B cell (primary cell): ENCODE measurements at regions of chr4 and their contacts with region 1.

Region 1: DNA sequence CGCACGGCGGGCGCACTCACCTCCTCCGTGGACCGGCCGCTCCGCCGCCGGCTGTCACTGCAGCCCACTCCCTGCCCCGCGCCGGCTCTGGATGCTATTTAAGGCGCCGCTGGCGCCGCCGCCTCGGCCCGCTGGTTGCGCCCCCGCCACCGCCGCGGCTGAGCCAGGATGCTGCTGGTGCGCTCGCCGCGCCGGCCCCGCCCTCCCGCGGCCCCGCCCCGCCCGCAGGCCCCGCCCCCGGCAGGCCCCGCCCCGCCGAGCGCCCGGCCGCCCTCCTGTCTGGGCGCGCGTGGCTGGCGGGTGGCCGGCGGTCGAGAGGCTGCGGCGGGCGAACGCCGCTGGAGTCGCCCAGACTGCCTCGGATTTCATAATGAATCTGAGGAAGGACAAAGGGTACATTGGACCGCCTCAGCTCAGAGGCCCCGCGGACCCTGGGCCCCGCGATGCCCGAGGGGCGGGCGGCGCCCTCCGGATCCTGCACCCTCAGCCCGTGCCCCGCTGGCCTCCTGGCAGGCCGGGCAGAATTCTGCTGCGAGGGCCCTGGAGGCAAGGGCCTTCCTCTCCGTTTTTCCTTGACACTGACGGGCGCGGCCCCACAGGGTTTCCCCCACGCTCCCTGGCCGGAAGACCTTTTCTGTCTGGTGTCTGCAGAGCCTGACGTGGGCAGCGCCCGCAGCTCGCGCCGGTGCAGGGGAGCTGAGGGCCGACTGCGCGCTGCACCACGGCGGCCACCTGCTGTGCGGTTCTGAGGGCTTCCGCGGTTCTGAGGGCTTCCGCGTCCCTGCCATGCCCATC is at the start of gene ACSL1:
- DNase-seq: peak; percentile 89
- ATAC-seq: peak; percentile 80
- H3K4me3 ChIP-seq: peak within 1 kb of the TSS; percentile 58 to 94 (median 76)
- H3K4me3 Mint-ChIP-seq: peak within 1 kb of the TSS; percentile 98
- H3K27ac ChIP-seq: peak within 1 kb of the TSS; percentile 48 to 93
- H3K27ac Mint-ChIP-seq: peak within 1 kb of the TSS; percentile 96
- H3K4me1 ChIP-seq: peaks cover 23 to 26% of the 10 kb centered on the region in 2 donors
- H3K4me1 Mint-ChIP-seq: peaks cover 46% of the 10 kb centered on the region
- H3K27me3 ChIP-seq: no peaks in the 10 kb centered on the region
- H3K27me3 Mint-ChIP-seq: no peaks in the 10 kb centered on the region
- CTCF ChIP-seq: no peak
- total RNA-seq, gene ACSL1: 31.8 and 32.2 TPM in 2 replicates

Region 2: DNA sequence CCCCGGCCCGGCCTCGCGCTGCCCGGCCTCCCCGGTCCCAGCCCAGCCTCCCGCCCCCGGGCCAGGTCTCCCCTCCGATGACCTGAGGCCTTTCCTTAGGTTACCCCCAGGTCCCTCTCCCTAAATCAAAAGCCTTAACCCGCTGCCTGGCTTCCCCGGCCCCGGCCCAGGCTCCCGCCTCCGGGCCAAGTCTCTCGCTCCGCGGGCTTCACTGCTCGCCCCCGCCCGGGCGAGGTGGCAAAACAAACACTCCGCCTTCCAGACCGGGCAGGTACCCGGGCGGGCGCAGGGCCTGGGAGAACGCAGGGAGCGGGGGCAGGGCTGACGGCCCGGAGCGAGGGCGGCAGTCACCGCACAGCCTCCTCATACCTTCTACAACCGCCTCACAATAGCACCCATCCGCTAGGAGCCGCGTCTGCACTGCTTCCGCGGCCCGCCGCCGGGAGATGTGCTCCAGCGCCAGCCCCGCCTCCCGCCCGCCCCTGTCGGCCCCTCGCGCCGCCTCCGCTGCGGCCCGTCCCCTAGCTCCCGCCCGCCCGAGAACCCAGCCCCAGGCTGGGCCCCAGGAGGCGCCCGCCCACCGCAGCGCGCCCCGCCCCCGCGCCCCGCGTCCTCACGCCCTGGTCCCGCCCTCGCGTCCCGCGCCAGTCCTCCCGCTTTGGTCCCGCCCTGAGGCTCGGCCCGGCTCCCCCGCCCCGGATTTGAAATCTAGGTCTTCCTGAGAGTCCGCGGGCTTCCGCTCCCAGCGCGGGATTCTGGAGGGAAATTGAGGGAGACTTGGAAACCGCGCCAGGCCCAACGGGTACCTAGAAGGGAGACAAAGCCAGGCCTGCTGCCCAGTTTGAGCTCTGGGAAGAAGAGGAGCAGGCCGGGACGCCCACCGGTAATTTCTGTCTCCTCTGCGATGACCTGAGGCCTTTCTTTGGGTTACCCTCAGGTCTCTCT is 176.8 kb before region 1 on chr4 and contains the starts of genes CASP3 and PRIMPOL:
- CTCF ChIA-PET with region 1: no interaction called
- POLR2A ChIA-PET with region 1: no interaction called
- intact Hi-C with region 1: loop called (anchors 1 kb)
- DNase-seq: peak; percentile 97
- ATAC-seq: peak; percentile 95
- H3K4me3 ChIP-seq: peak within 1 kb of the TSS; percentile 75 to 95 (median 89)
- H3K4me3 Mint-ChIP-seq: peak within 1 kb of the TSS; percentile 94
- H3K27ac ChIP-seq: peak within 1 kb of the TSS; percentile 71 to 95
- H3K27ac Mint-ChIP-seq: peak within 1 kb of the TSS; percentile 94
- H3K4me1 ChIP-seq: peaks cover 24 to 29% of the 10 kb centered on the region in 2 donors
- H3K4me1 Mint-ChIP-seq: peaks cover 44% of the 10 kb centered on the region
- H3K27me3 ChIP-seq: no peaks in the 10 kb centered on the region
- H3K27me3 Mint-ChIP-seq: no peaks in the 10 kb centered on the region
- CTCF ChIP-seq: peak; percentile 18
- total RNA-seq, gene CASP3: 15.8 and 16.8 TPM in 2 replicates
- total RNA-seq, gene PRIMPOL: 15.4 and 21.5 TPM in 2 replicates

Region 3: DNA sequence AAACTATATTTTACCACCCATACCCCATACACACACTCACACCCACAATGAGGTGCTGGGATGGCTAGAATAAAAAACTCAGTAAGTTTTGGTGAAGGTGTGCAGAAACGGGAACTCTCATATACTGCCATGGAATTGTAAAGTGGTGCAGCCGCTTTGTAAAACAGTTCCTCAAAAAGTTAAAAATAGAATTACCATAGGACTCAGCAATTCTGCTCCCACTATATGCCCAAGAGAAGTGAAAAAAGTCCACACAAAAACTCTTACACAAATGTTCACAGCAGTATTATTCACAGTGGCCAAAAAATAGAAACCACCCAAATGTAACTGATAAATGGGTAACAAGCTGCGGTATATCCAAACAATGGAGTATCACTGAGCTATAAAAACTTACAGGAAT is 98.7 kb before region 1 on chr4:
- CTCF ChIA-PET with region 1: no interaction called
- POLR2A ChIA-PET with region 1: no interaction called
- intact Hi-C with region 1: no loop called
- DNase-seq: no peak
- ATAC-seq: no peak
- H3K4me3 ChIP-seq: no peak overlapping the region
- H3K4me3 Mint-ChIP-seq: no peak overlapping the region
- H3K27ac ChIP-seq: no peak overlapping the region
- H3K27ac Mint-ChIP-seq: no peak overlapping the region
- H3K4me1 ChIP-seq: peaks cover 0 to 17% of the 10 kb centered on the region in 2 donors
- H3K4me1 Mint-ChIP-seq: peaks cover 22% of the 10 kb centered on the region
- H3K27me3 ChIP-seq: no peaks in the 10 kb centered on the region
- H3K27me3 Mint-ChIP-seq: no peaks in the 10 kb centered on the region
- CTCF ChIP-seq: no peak

Region 4: GRCh38 chr4:184755278-184755677 is 70.8 kb before region 1 on chr4:
- CTCF ChIA-PET with region 1: no interaction called
- POLR2A ChIA-PET with region 1: no interaction called
- intact Hi-C with region 1: no loop called
- DNase-seq: no peak
- ATAC-seq: no peak
- H3K4me3 ChIP-seq: no peak overlapping the region
- H3K4me3 Mint-ChIP-seq: no peak overlapping the region
- H3K27ac ChIP-seq: no peak overlapping the region
- H3K27ac Mint-ChIP-seq: no peak overlapping the region
- H3K4me1 ChIP-seq: no peaks in the 10 kb centered on the region
- H3K4me1 Mint-ChIP-seq: no peaks in the 10 kb centered on the region
- H3K27me3 ChIP-seq: no peaks in the 10 kb centered on the region
- H3K27me3 Mint-ChIP-seq: no peaks in the 10 kb centered on the region
- CTCF ChIP-seq: no peak

Region 5: DNA sequence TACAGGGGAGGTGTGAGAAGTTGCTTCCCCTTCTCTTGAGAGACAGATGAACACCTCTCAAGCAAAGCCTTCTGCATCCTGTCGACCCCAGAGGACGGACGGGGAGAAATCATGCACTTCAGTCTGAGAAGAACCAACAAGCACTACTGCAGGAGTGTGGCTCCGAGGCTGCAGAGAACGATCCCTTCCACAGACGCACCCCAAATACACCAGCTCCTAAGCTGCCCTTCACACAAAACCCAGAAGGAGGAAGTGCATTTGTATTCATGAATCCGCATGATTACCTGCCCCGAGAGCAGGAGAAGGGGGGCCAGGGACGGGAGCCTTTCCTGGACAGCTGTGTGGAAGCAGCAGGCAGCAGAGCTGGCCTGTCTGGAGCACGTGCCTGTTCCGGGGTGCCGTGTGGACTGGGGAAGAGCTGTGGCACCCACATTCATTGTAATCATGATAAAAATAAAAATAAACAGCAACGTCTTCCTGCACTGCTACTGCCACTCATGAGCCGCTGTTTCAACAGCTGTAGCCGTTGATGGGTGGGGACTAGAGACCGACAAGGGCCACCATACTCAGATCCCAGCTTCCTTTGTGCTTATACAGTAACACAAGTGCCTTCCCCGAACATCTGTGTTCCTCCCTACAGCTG is 43.2 kb before region 1 on chr4:
- CTCF ChIA-PET with region 1: interaction called, 3 read pairs
- POLR2A ChIA-PET with region 1: no interaction called
- intact Hi-C with region 1: loop called (anchors 2 kb)
- DNase-seq: peak; percentile 60
- ATAC-seq: peak; percentile 65
- H3K4me3 ChIP-seq: peak overlapping the region; percentile 2 to 57 (median 46)
- H3K4me3 Mint-ChIP-seq: peak overlapping the region; percentile 85
- H3K27ac ChIP-seq: peak overlapping the region; percentile 44 to 48
- H3K27ac Mint-ChIP-seq: peak overlapping the region; percentile 86
- H3K4me1 ChIP-seq: peaks cover 11 to 19% of the 10 kb centered on the region in 2 donors
- H3K4me1 Mint-ChIP-seq: peaks cover 23% of the 10 kb centered on the region
- H3K27me3 ChIP-seq: no peaks in the 10 kb centered on the region
- H3K27me3 Mint-ChIP-seq: no peaks in the 10 kb centered on the region
- CTCF ChIP-seq: no peak

Region 6: DNA sequence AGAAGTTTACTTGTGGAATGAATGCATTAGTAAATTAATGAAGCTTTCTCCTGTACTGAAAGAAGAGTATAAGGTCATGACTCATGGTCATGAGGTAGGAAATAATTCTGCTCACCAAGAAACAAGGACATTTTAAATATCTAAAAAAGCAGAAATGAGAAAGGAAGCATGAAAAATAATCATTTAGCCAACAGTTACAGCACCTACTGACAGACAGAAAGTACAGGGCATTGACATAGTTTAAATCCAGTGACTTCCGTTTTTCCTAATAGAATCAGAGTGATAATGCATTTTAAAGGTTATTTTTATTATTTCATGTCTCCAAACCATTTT is 30.1 kb after region 1 on chr4:
- CTCF ChIA-PET with region 1: no interaction called
- POLR2A ChIA-PET with region 1: interaction called, 15 read pairs
- intact Hi-C with region 1: loop called (anchors 1 kb)
- DNase-seq: peak; percentile 59
- ATAC-seq: peak; percentile 62
- H3K4me3 ChIP-seq: no peak overlapping the region
- H3K4me3 Mint-ChIP-seq: peak overlapping the region; percentile 72
- H3K27ac ChIP-seq: no peak overlapping the region
- H3K27ac Mint-ChIP-seq: peak overlapping the region; percentile 56
- H3K4me1 ChIP-seq: peaks cover 29 to 47% of the 10 kb centered on the region in 2 donors
- H3K4me1 Mint-ChIP-seq: peaks cover 38% of the 10 kb centered on the region
- H3K27me3 ChIP-seq: no peaks in the 10 kb centered on the region
- H3K27me3 Mint-ChIP-seq: no peaks in the 10 kb centered on the region
- CTCF ChIP-seq: no peak

Region 7: DNA sequence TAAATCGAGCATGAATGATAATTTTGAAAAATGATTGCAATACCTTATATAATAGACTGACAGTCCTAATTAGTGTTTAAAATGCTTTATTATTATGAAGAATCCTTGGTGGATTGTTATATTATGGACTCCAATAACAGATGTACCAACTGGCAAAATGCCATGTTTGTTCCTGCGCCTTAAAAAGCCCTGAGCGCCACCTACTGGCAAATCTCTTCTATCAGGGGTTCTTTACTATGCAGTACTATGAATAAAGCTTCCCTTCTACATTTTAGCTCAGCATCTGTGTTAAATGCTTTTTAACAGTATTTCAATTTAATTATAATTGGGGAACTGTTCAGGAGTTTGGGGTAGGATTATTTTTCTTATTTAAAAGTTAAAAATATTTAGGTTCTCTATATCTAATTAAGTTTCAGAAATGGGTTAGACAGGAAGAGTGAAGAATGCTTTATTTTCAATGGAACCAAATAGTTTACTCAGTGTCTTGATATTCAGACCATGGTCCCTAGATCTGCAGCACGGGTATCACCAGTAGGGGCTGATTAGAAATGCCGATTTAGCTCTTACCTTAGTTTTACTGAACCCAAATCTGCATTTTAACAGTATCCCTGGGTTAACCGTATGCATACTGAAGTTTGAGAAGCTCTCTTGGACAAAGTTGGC is 357.7 kb after region 1 on chr4:
- CTCF ChIA-PET with region 1: no interaction called
- POLR2A ChIA-PET with region 1: interaction called, 11 read pairs
- intact Hi-C with region 1: no loop called
- DNase-seq: peak; percentile 85
- ATAC-seq: peak; percentile 69
- H3K4me3 ChIP-seq: no peak overlapping the region
- H3K4me3 Mint-ChIP-seq: no peak overlapping the region
- H3K27ac ChIP-seq: no peak overlapping the region
- H3K27ac Mint-ChIP-seq: no peak overlapping the region
- H3K4me1 ChIP-seq: no peaks in the 10 kb centered on the region
- H3K4me1 Mint-ChIP-seq: peaks cover 6% of the 10 kb centered on the region
- H3K27me3 ChIP-seq: no peaks in the 10 kb centered on the region
- H3K27me3 Mint-ChIP-seq: no peaks in the 10 kb centered on the region
- CTCF ChIP-seq: peak; percentile 92